A549 (cell line): ENCODE measurements at regions of chr2 and their contacts with region 1.

Region 1: DNA sequence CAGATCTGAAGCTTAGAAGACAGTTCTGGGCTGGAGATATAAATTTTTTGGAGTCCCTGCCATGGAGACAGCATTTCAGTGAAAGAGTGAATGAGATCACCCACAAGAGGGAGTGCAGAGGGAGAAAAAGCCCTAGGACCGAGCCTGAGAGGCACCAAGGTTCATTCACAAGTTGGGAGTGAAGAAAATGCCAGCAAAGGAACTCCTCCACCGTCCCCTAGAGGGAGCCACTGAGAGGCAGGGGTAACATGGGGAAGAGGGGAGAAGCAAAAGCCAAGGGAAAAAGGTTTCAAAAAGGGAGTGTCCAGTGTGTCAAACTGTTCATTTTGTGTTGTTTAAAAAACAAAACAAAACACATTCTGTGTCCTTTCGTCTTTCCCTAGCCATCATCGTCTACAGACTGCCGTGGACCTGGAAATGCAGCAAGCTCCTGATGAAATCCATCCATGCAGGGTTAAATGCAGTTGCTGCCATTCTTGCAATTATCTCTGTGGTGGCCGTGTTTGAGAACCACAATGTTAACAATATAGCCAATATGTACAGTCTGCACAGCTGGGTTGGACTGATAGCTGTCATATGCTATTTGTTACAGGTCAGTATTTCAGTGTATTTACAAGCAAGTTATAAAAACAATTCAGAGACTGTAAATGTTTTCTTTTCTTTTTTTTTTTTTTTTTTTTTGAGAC is 19.1 kb downstream of the CYBRD1 start:
- DNase-seq: peak in 1 of 2 experiments; percentile 52
- ATAC-seq: peak; percentile 70
- H3K4me3 ChIP-seq: no peak overlapping the region
- H3K27ac ChIP-seq: no peak overlapping the region
- H3K4me1 ChIP-seq: no peaks in the 10 kb centered on the region
- CTCF ChIP-seq: peak; percentile 45
- EP300 ChIP-seq: no peak
- POLR2A ChIP-seq: no peak
- RAD21 ChIP-seq: no peak

Region 2: GRCh38 chr2:171529914-171530313 is 11.4 kb before region 1 on chr2:
- CTCF ChIA-PET with region 1: interaction called, 18 read pairs
- POLR2A ChIA-PET with region 1: interaction called, 3 read pairs
- DNase-seq: peak; percentile 8 to 25
- ATAC-seq: peak; percentile 54 to 73; a peak in 4 of 6 replicates
- H3K4me3 ChIP-seq: no peak overlapping the region
- H3K27ac ChIP-seq: no peak overlapping the region
- H3K4me1 ChIP-seq: peaks cover 11% of the 10 kb centered on the region; the same call in 2 of the 3 replicates
- CTCF ChIP-seq: peak; percentile 26; the same call in 1 of the 3 replicates
- EP300 ChIP-seq: no peak
- POLR2A ChIP-seq: no peak
- RAD21 ChIP-seq: no peak

Region 3: GRCh38 chr2:171553858-171554257 is 12.5 kb after region 1 on chr2:
- CTCF ChIA-PET with region 1: no interaction called
- POLR2A ChIA-PET with region 1: no interaction called
- DNase-seq: peak; percentile 79 to 96
- ATAC-seq: peak; percentile 100
- H3K4me3 ChIP-seq: peak overlapping the region; percentile 51
- H3K27ac ChIP-seq: peak overlapping the region; percentile 71 to 83
- H3K4me1 ChIP-seq: peaks cover 10% of the 10 kb centered on the region; the same call in 2 of the 3 replicates
- CTCF ChIP-seq: no peak
- EP300 ChIP-seq: no peak
- POLR2A ChIP-seq: peak; percentile 31
- RAD21 ChIP-seq: no peak

Region 4: DNA sequence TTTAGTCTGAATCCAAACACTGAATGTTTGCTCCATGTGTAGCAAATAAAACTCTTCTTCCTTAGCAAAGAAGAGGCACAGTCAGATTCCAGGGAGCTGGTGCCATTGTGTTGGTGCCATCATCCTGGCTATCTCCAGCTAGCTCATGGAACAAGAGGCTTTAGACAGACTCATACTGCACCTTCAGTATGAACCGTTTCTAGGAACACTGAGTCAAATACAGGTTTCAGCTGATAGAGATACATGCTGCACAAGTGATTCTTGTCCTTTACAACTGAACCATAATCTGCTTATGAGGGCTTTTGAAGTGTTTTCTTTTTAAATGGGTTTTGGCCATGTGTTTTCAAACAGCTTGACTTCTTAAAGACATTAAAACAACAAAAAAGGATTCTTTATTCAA is 203.8 kb after region 1 on chr2:
- CTCF ChIA-PET with region 1: no interaction called
- POLR2A ChIA-PET with region 1: no interaction called
- DNase-seq: no peak
- ATAC-seq: no peak
- H3K4me3 ChIP-seq: no peak overlapping the region
- H3K27ac ChIP-seq: no peak overlapping the region
- H3K4me1 ChIP-seq: no peaks in the 10 kb centered on the region
- CTCF ChIP-seq: no peak
- EP300 ChIP-seq: no peak
- POLR2A ChIP-seq: no peak
- RAD21 ChIP-seq: no peak